ENCODE measurements at regions of chr4 and their contacts with region 1.

Region 1: GRCh38 chr4:88672987-88673386 is 24.6 kb downstream of the NAP1L5 start:
- DNase-seq: no peak
- H3K4me3 ChIP-seq: no peak overlapping the region
- CTCF ChIP-seq: peak; percentile 50

Region 2: GRCh38 chr4:87949961-87950360 is 723.0 kb before region 1 on chr4:
- CTCF ChIA-PET with region 1: no interaction called
- POLR2A ChIA-PET with region 1: no interaction called
- DNase-seq: no peak
- H3K4me3 ChIP-seq: no peak overlapping the region
- CTCF ChIP-seq: no peak

Region 3: GRCh38 chr4:88659055-88659889 is 13.7 kb before region 1 on chr4:
- CTCF ChIA-PET with region 1: interaction called, 62 read pairs
- POLR2A ChIA-PET with region 1: no interaction called
- DNase-seq: no peak
- H3K4me3 ChIP-seq: no peak overlapping the region
- CTCF ChIP-seq: peak; percentile 61

Region 4: GRCh38 chr4:88690355-88690754 is 17.4 kb after region 1 on chr4:
- CTCF ChIA-PET with region 1: interaction called, 31 read pairs
- POLR2A ChIA-PET with region 1: no interaction called
- DNase-seq: no peak
- H3K4me3 ChIP-seq: no peak overlapping the region
- CTCF ChIP-seq: no peak

Measured in AG04449 (cell line).